Activated naive CD4-positive, alpha-beta T cell treated with anti-CD3 and anti-CD28 coated beads, Interleukin-2, amount 10 ng/mL, durations not matched to agents 7 days and 5 days (primary cell): ENCODE measurements at regions of chr6 and their contacts with region 1.

Region 1: GRCh38 chr6:135451693-135452092 is 45.8 kb downstream of the AHI1 start:
- DNase-seq: no peak
- H3K4me3 Mint-ChIP-seq: no peak overlapping the region
- H3K27ac Mint-ChIP-seq: no peak overlapping the region
- H3K4me1 Mint-ChIP-seq: no peaks in the 10 kb centered on the region
- H3K27me3 Mint-ChIP-seq: no peaks in the 10 kb centered on the region

Region 2: GRCh38 chr6:135438907-135439535 is 12.7 kb before region 1 on chr6:
- CTCF ChIA-PET with region 1: interaction called, 15 read pairs
- DNase-seq: no peak
- H3K4me3 Mint-ChIP-seq: no peak overlapping the region
- H3K27ac Mint-ChIP-seq: peak overlapping the region; percentile 59
- H3K4me1 Mint-ChIP-seq: peaks cover 23% of the 10 kb centered on the region
- H3K27me3 Mint-ChIP-seq: no peaks in the 10 kb centered on the region

Region 3: DNA sequence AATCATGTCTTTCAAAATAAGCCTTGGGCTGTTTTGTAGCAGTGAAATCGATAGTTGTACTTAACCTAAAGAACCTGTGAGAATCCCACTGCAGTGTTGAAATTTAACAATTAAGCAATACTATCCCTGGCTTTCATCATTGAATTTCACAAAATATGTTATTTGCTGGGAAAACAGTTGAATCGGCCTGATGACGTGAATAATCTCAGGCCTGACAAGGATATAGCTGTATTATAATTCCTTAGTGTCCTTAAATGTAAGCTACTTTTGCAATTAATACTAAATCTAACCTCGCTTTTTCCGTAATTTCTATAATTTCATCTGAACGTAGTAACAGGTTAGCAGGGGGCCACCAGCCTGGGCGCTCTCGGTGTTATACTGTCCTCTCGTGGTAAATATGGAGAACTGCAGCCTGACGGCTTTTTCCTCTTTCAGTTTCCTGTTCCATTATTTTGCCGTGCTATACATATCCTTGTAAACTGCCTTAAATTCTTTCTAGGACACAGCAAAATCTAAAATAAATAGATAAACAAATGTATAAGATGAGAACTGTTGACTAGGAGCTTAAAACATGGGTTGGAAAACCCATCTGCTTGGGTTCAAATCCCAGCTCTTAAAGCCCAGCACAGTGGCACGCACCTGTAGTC is 774.5 kb after region 1 on chr6:
- CTCF ChIA-PET with region 1: interaction called, 22 read pairs
- DNase-seq: peak; percentile 64
- H3K4me3 Mint-ChIP-seq: no peak overlapping the region
- H3K27ac Mint-ChIP-seq: no peak overlapping the region
- H3K4me1 Mint-ChIP-seq: no peaks in the 10 kb centered on the region
- H3K27me3 Mint-ChIP-seq: no peaks in the 10 kb centered on the region